Posterior vena cava (tissue), 2 donors: ENCODE measurements at regions of chr14 and their contacts with region 1.

Region 1: DNA sequence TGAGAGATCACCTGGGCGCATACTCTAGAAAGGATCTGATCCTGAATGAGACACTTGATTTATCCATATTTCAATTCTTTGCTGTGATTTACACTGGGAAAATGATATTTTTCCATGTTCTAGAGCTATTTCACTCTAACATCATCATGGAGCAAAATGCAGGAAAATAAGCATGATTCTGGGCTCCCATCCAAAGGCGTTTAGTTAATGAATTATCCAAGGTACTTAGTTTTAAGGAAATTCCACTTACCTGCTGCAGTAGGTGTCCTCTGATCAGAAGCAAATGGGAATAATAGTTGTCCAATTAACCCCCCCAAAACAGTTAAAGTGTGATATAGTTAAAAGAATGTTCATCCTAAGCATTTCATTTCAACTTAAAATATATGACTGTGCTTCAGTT is 204.5 kb upstream of the PRKD1 start:
- DNase-seq: no peak

Region 2: GRCh38 chr14:30108975-30109700 is 23.1 kb before region 1 on chr14:
- intact Hi-C with region 1: loop called in 1 of 2 experiments (anchors 2 kb)
- DNase-seq: no peak